ENCODE measurements at regions of chr7 and their contacts with region 1.

Region 1: GRCh38 chr7:836411-837400 is 4.4 kb downstream of the SUN1 start:
- DNase-seq: peak in 1 of 2 experiments; percentile 63
- H3K4me3 ChIP-seq: no peak overlapping the region
- H3K4me3 Mint-ChIP-seq: no peak overlapping the region
- H3K27ac Mint-ChIP-seq: peak overlapping the region; percentile 73
- H3K4me1 ChIP-seq: peaks cover 9% of the 10 kb centered on the region
- H3K4me1 Mint-ChIP-seq: peaks cover 13% of the 10 kb centered on the region
- H3K27me3 ChIP-seq: no peaks in the 10 kb centered on the region
- H3K27me3 Mint-ChIP-seq: no peaks in the 10 kb centered on the region
- CTCF ChIP-seq: peak; percentile 52 to 83

Region 2: DNA sequence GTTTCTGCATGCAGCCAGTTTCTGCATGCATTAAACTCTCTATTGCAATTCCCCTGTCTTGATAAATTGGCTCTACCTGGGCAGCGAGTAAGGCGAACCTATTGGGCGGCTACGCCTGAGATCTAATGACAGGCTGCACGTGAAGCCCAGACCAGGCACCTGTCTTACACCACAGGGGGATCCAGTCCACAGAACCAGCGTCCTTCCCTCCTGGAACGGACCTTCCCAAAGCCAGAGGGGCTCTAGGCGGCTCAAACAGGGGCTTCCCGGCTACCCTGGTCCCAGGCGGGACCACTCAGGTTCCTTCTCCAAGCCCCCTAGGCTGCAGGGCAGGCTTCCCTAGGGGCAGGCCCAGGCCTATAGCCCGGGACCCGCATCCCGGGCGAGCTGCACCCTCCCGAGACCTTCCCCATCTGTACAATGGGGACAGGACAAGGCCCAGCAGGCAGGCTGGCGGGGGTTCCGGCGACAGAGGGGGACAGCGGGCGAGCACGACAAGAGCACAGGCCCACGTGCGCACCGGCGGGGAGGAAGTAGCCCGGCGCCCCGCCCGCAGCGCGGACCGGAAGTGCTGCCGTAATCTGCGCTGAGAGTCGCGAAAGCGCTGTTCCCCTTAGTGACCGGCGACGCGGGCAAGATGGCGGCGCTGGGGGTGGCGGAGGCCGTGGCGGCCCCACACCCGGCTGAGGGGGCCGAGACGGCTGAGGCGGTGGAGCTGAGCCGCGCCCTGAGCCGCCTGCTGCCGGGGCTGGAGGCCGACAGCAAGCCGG is 110.4 kb before region 1 on chr7 and contains the start of gene DNAAF5:
- CTCF ChIA-PET with region 1: no interaction called
- POLR2A ChIA-PET with region 1: no interaction called
- intact Hi-C with region 1: no loop called
- DNase-seq: peak; percentile 88 to 89
- H3K4me3 ChIP-seq: peak within 1 kb of the TSS; percentile 87
- H3K4me3 Mint-ChIP-seq: peak within 1 kb of the TSS; percentile 98
- H3K27ac Mint-ChIP-seq: peak within 1 kb of the TSS; percentile 97
- H3K4me1 ChIP-seq: peaks cover 14% of the 10 kb centered on the region
- H3K4me1 Mint-ChIP-seq: peaks cover 6% of the 10 kb centered on the region
- H3K27me3 ChIP-seq: no peaks in the 10 kb centered on the region
- H3K27me3 Mint-ChIP-seq: no peaks in the 10 kb centered on the region
- CTCF ChIP-seq: peak in 1 of 2 experiments; percentile 2
- total RNA-seq, gene DNAAF5: 51.4 and 53.4 TPM in 2 replicates

Region 3: DNA sequence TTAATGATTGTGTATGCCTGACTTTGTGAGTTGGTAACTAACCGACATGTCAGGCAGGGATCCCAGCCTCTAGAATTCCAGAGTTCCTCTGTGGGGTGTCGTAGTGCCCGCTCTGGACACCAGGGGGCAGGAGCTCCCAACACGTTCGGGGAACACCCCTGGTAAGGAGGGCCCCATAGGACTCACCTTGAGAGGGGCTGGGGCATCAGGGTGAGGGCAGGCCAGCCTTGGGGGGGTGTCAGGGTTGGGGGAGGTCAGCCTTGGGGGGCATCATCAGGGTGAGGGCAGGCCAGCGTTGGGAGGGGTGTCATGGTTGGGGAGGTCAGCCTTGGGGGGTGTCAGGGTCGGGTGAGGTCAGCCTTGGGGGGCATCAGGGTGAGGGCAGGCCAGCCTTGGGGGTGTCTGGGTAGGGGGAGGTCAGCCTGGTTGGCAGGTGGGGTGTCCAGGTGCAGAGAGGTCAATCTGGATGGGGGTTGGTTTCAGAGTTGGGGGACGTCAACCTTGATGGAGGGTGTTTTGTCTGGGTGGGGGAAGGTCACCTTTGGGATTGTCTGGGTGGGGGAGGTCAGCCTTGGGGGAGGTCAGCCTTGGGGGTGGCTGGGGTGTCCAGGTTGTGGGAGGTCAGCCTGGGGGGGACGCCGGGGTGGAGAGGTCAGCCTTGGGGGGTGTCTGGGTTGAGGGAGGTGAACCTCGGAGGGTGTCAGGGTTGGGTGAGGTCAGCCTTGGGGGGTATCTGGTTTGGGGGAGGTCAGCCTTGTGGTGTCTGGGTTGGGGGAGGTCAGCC is 50.0 kb before region 1 on chr7:
- CTCF ChIA-PET with region 1: interaction called, 4 read pairs
- POLR2A ChIA-PET with region 1: no interaction called
- intact Hi-C with region 1: loop called (anchors 5 kb)
- DNase-seq: peak; percentile 66 to 79
- H3K4me3 ChIP-seq: no peak overlapping the region
- H3K4me3 Mint-ChIP-seq: no peak overlapping the region
- H3K27ac Mint-ChIP-seq: no peak overlapping the region
- H3K4me1 ChIP-seq: no peaks in the 10 kb centered on the region
- H3K4me1 Mint-ChIP-seq: no peaks in the 10 kb centered on the region
- H3K27me3 ChIP-seq: no peaks in the 10 kb centered on the region
- H3K27me3 Mint-ChIP-seq: no peaks in the 10 kb centered on the region
- CTCF ChIP-seq: peak; percentile 71 to 90